Panc1 (cell line): ENCODE measurements at regions of chr19 and their contacts with region 1.

Region 1: GRCh38 chr19:41883821-41884733 is 1.1 kb downstream of the ARHGEF1 start:
- DNase-seq: peak; percentile 68
- ATAC-seq: peak; percentile 95
- H3K4me3 ChIP-seq: peak overlapping the region; percentile 79 to 93
- H3K27ac ChIP-seq: peak overlapping the region; percentile 90
- H3K4me1 ChIP-seq: peaks cover 25% of the 10 kb centered on the region
- H3K27me3 ChIP-seq: no peaks in the 10 kb centered on the region
- CTCF ChIP-seq: no peak

Region 2: GRCh38 chr19:41934849-41935374 is 50.8 kb after region 1 on chr19:
- CTCF ChIA-PET with region 1: no interaction called
- POLR2A ChIA-PET with region 1: no interaction called
- in situ Hi-C with region 1: no loop called
- intact Hi-C with region 1: loop called (anchors 10 kb)
- DNase-seq: peak; percentile 30
- ATAC-seq: peak; percentile 84
- H3K4me3 ChIP-seq: no peak overlapping the region
- H3K27ac ChIP-seq: no peak overlapping the region
- H3K4me1 ChIP-seq: no peaks in the 10 kb centered on the region
- H3K27me3 ChIP-seq: no peaks in the 10 kb centered on the region; the same call in 1 of the 2 replicates
- CTCF ChIP-seq: peak; percentile 91

Region 3: DNA sequence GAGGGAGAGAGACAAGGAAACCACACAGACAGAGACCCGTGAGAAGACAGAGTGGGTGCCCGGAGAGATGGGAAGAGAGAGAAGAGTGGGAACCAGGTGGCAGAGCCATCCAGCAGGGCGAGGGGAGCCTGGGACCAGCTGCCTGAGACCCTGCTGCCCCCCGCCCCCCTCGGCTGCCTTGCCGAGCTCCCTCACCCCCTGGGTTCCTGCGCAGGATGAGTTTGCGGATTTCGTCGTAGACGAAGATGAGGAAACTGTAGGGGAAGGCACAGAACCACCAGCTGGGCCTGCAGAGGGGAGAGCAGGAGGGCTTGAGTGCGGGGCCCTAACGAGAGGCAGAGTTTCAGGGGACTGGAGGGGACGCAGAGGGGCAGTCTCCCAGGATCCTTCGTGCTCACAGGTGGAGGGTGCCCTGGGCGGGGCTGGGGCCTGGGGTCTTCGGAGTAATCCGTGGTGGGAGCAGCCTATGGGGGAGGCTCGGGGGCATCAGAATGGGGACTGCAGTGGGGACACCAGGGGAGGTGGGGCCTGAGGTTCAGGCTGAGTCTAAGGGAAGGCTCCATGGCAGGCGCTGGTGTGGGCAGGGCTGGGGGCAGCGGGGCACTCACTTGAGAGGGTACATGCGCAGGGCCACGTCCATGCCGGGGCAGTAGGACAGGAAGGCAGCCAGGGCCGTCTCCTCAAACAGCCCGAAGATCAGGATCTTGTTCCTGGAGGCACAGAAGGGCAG is 83.1 kb after region 1 on chr19:
- CTCF ChIA-PET with region 1: no interaction called
- POLR2A ChIA-PET with region 1: no interaction called
- in situ Hi-C with region 1: no loop called
- intact Hi-C with region 1: no loop called
- DNase-seq: no peak
- ATAC-seq: no peak
- H3K4me3 ChIP-seq: no peak overlapping the region
- H3K27ac ChIP-seq: no peak overlapping the region
- H3K4me1 ChIP-seq: no peaks in the 10 kb centered on the region
- H3K27me3 ChIP-seq: no peaks in the 10 kb centered on the region
- CTCF ChIP-seq: no peak

Region 4: DNA sequence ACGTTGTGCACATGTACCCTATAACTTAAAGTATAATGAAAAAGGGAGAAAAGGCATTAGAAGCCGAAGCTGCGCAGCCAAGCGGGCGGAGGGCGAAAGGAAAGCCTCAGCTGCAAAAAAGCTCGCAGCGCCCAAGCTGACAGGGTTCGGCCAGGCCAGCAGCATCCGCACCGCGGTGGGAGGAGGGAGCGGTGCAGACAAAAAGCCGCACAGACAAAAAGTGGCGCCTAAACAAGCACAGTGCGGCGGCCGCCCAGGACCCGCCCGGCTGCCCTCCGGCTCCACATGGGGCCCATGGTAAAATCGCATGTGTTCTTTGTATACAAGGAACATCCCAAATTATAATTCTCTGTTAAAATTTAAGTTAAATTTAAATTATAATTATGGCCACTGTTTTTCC is 813.8 kb after region 1 on chr19:
- CTCF ChIA-PET with region 1: no interaction called
- POLR2A ChIA-PET with region 1: no interaction called
- in situ Hi-C with region 1: no loop called
- intact Hi-C with region 1: no loop called
- DNase-seq: no peak
- ATAC-seq: no peak
- H3K4me3 ChIP-seq: no peak overlapping the region
- H3K27ac ChIP-seq: no peak overlapping the region
- H3K4me1 ChIP-seq: no peaks in the 10 kb centered on the region
- H3K27me3 ChIP-seq: peaks cover 4% of the 10 kb centered on the region
- CTCF ChIP-seq: no peak